ENCODE measurements at regions of chr3 and their contacts with region 1.

Region 1: DNA sequence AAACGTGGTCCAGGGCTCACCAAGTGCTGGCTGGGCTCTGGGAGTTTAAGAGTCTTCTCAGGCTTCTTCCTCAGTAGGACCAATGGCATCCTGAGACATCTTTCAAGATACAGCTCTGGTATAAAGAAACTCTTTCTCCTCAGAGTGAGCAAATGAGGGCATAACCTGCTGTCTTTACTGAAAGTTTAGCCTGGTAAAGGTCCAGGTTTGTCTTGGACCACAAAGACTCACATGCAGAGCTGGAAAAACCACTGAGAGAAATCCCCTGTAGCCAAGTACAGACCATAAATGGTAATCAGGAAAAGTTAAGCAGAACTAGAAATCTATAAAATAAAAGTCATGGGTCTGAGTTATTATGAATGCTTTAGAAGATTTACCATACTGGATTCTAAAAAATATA is 23.1 kb downstream of the CD47 start:
- DNase-seq: no peak
- ATAC-seq: no peak
- H3K4me3 ChIP-seq: no peak overlapping the region
- H3K4me3 Mint-ChIP-seq: no peak overlapping the region
- H3K27ac ChIP-seq: peak overlapping the region in 1 of 2 donors; percentile 65
- H3K27ac Mint-ChIP-seq: peak overlapping the region; percentile 64
- H3K4me1 ChIP-seq: peaks cover 17 to 48% of the 10 kb centered on the region in 2 donors
- H3K4me1 Mint-ChIP-seq: peaks cover 72% of the 10 kb centered on the region
- H3K27me3 ChIP-seq: no peaks in the 10 kb centered on the region
- H3K27me3 Mint-ChIP-seq: no peaks in the 10 kb centered on the region
- CTCF ChIP-seq: no peak

Region 2: GRCh38 chr3:107992981-107993684 is 74.6 kb before region 1 on chr3:
- CTCF ChIA-PET with region 1: no interaction called
- POLR2A ChIA-PET with region 1: interaction called, 10 read pairs
- intact Hi-C with region 1: no loop called
- DNase-seq: no peak
- ATAC-seq: peak; percentile 76
- H3K4me3 ChIP-seq: no peak overlapping the region
- H3K4me3 Mint-ChIP-seq: no peak overlapping the region
- H3K27ac ChIP-seq: no peak overlapping the region
- H3K27ac Mint-ChIP-seq: no peak overlapping the region
- H3K4me1 ChIP-seq: peaks cover 0 to 11% of the 10 kb centered on the region in 2 donors
- H3K4me1 Mint-ChIP-seq: peaks cover 17% of the 10 kb centered on the region
- H3K27me3 ChIP-seq: no peaks in the 10 kb centered on the region
- H3K27me3 Mint-ChIP-seq: peaks cover 4% of the 10 kb centered on the region
- CTCF ChIP-seq: no peak

Region 3: GRCh38 chr3:108079877-108080659 is 12.3 kb after region 1 on chr3:
- CTCF ChIA-PET with region 1: no interaction called
- POLR2A ChIA-PET with region 1: interaction called, 14 read pairs
- intact Hi-C with region 1: loop called (anchors 2 kb)
- DNase-seq: no peak
- ATAC-seq: no peak
- H3K4me3 ChIP-seq: no peak overlapping the region
- H3K4me3 Mint-ChIP-seq: peak overlapping the region; percentile 6
- H3K27ac ChIP-seq: peak overlapping the region in 1 of 2 donors; percentile 67
- H3K27ac Mint-ChIP-seq: peak overlapping the region; percentile 42
- H3K4me1 ChIP-seq: peaks cover 46 to 84% of the 10 kb centered on the region in 2 donors
- H3K4me1 Mint-ChIP-seq: peaks cover 52% of the 10 kb centered on the region
- H3K27me3 ChIP-seq: no peaks in the 10 kb centered on the region
- H3K27me3 Mint-ChIP-seq: no peaks in the 10 kb centered on the region
- CTCF ChIP-seq: no peak

Region 4: GRCh38 chr3:108334701-108335100 is 266.9 kb after region 1 on chr3:
- CTCF ChIA-PET with region 1: no interaction called
- POLR2A ChIA-PET with region 1: no interaction called
- intact Hi-C with region 1: no loop called
- DNase-seq: no peak
- ATAC-seq: no peak
- H3K4me3 ChIP-seq: no peak overlapping the region
- H3K4me3 Mint-ChIP-seq: no peak overlapping the region
- H3K27ac ChIP-seq: no peak overlapping the region
- H3K27ac Mint-ChIP-seq: no peak overlapping the region
- H3K4me1 ChIP-seq: peaks cover 11 to 12% of the 10 kb centered on the region in 2 donors
- H3K4me1 Mint-ChIP-seq: peaks cover 15% of the 10 kb centered on the region
- H3K27me3 ChIP-seq: no peaks in the 10 kb centered on the region
- H3K27me3 Mint-ChIP-seq: no peaks in the 10 kb centered on the region
- CTCF ChIP-seq: no peak

Measured in B cell (primary cell).